ENCODE measurements at regions of chr2 and their contacts with region 1.

Region 1: GRCh38 chr2:20661067-20661980 is 5.6 kb upstream of the GDF7 start:
- DNase-seq: no peak
- H3K4me3 ChIP-seq: no peak overlapping the region
- H3K27me3 ChIP-seq: peaks cover 36% of the 10 kb centered on the region
- CTCF ChIP-seq: peak; percentile 96

Region 2: DNA sequence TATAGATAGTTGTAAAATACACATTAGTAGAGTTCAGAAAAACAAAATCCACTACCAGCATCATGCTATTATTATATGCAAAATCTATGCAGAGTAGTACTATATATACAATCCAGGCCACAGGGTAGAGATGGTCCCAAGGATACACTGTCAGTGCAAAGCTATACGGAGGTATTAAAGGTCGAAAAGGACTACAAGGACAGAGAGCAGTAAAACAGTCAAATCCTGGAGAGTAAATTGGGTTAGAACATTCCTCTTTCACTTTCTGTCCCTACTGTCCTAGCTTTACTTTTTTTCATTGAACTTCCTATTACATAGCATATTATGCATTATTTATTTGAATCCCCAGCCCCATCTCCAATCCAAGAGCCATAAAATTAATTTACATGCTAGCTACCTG is 396.7 kb before region 1 on chr2:
- CTCF ChIA-PET with region 1: no interaction called
- POLR2A ChIA-PET with region 1: no interaction called
- DNase-seq: no peak
- H3K4me3 ChIP-seq: no peak overlapping the region
- H3K27me3 ChIP-seq: no peaks in the 10 kb centered on the region
- CTCF ChIP-seq: no peak

Region 3: DNA sequence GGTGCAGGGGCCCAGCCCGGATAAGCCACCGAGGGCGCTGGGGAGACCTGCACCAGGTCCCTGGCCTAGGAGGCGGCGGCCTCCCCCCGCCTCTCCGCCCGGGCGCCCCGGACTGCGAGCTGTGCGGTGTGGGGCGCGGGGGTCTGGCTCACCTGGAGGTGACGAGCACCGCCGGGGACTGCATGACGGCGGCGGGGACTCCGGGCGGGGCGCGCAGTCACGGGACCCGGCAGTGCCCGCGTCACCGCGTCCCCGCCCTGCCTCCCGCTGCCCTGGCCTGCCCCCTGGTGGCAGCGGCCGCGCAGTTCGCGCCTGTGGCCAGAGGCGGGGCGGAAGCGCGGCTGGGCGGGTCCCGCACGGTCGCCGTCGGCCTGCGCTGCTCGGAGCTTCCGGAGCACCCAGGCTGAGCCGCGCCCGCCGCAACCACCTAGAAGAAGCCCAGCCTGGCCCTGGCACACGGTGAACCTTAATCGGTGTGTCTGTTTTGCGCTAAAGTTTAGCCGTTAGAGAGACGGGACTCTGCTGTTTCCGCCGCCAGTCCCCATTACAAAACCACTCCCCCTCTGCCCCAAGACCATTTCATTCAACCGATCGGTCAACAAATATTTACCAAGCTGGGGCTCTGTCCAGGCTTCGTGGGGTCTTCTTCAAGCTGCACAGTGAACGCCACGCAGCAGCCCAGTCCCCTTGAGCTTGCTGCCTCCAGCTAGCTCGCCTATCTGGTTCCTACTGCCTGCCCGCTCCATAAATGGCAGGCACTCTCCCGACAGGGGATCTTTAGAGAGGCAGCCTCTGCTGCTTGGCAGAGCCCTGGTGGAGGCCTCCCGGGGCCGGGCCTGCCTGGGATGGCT is 10.2 kb before region 1 on chr2 and contains the start of gene HS1BP3:
- CTCF ChIA-PET with region 1: interaction called, 126 read pairs
- POLR2A ChIA-PET with region 1: no interaction called
- DNase-seq: no peak
- H3K4me3 ChIP-seq: peak within 1 kb of the TSS; percentile 88
- H3K27me3 ChIP-seq: peaks cover 4% of the 10 kb centered on the region
- CTCF ChIP-seq: peak; percentile 34
- polyA plus RNA-seq, gene HS1BP3: 8.3 and 13.6 TPM in 2 replicates

Region 4: GRCh38 chr2:20682167-20682920 is 21.0 kb after region 1 on chr2:
- CTCF ChIA-PET with region 1: interaction called, 123 read pairs
- POLR2A ChIA-PET with region 1: no interaction called
- DNase-seq: no peak
- H3K4me3 ChIP-seq: no peak overlapping the region
- H3K27me3 ChIP-seq: no peaks in the 10 kb centered on the region
- CTCF ChIP-seq: peak; percentile 83

Region 5: GRCh38 chr2:20953145-20953824 is 292.0 kb after region 1 on chr2:
- CTCF ChIA-PET with region 1: interaction called, 221 read pairs
- POLR2A ChIA-PET with region 1: no interaction called
- DNase-seq: no peak
- H3K4me3 ChIP-seq: no peak overlapping the region
- H3K27me3 ChIP-seq: no peaks in the 10 kb centered on the region
- CTCF ChIP-seq: no peak

Region 6: DNA sequence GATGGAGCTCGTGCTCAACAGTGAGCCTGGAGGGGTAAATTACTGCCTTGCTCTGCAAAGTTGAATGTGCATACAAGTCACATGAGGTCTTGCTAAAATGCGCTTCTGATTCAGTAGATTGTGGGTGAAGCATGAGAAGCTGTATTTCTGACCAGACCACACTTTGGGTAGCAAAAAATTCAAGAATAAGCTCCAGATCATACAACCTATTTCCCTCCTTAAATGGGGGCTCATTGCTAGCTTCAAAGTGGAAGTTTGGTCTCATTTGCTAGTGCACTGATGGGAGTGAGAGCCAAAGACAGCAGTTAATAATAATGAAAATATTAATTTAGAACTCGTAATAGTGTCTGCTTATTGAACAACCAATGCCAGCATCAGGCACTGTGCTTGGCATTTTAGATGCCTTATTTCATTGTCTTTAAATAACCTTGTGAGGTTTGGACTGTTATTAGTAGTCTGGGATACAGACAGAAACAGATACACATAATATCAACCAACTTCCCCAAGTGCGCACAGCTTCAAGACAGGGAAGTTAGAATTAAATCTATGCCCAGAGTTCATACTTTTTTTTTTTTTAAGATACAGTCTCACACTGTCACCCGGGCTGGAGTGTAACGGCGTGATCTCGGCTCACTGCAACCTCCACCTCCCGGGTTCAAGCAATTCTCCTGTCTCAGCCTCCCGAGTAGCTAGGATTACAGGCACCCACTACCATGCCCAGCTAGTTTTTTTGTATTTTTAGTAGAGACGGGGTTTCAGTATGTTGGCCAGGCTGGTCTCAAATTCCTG is 364.6 kb after region 1 on chr2:
- CTCF ChIA-PET with region 1: interaction called, 13 read pairs
- POLR2A ChIA-PET with region 1: no interaction called
- DNase-seq: no peak
- H3K4me3 ChIP-seq: no peak overlapping the region
- H3K27me3 ChIP-seq: no peaks in the 10 kb centered on the region
- CTCF ChIP-seq: no peak